Prostate gland (tissue), 2 donors: ENCODE measurements at regions of chr17 and their contacts with region 1.

Region 1: DNA sequence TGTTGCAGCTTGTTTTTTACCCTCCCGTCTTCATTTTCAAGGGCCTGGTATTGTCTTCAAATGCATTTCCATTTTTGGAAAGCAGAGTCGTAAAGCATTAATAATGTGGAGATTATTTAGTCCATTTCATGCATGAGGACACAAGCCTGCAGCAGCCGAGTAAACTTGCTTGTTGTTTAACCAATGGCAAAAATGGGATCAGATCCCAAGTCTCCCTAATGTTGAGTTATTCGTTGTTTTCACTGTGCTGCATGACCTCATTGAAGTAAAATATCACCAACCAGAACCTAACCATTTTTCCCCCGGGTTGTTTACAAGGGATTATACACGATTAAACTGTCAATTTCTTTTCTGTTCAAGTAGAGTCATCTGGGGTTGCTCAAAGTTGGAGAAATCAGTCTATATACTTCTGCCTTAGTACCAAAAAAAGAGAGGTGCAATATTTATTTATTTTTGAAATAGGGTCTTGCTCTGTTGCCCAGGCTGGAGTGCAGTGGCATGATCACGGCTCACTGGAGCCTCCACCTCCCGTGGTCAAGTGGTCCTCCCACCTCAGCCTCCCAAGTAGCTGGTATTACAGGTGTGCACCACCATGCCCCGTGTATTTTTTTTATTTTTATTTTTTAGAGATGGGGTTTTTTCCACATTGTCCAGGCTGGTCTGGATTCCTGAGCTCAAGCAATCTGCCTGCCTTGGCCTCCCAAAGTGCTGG is 12.4 kb downstream of the AMZ2 start:
- DNase-seq: no peak
- H3K4me3 ChIP-seq: no peak overlapping the region
- H3K27ac ChIP-seq: no peak overlapping the region
- H3K4me1 ChIP-seq: no peaks in the 10 kb centered on the region
- H3K27me3 ChIP-seq: no peaks in the 10 kb centered on the region
- CTCF ChIP-seq: no peak
- POLR2A ChIP-seq: no peak

Region 2: GRCh38 chr17:68398691-68399637 is 138.8 kb after region 1 on chr17:
- intact Hi-C with region 1: loop called (anchors 10 kb)
- DNase-seq: peak; percentile 59
- H3K4me3 ChIP-seq: no peak overlapping the region
- H3K27ac ChIP-seq: no peak overlapping the region
- H3K4me1 ChIP-seq: no peaks in the 10 kb centered on the region
- H3K27me3 ChIP-seq: no peaks in the 10 kb centered on the region
- CTCF ChIP-seq: peak; percentile 63 to 84 (median 78)
- POLR2A ChIP-seq: no peak

Region 3: GRCh38 chr17:68435876-68436842 is 176.0 kb after region 1 on chr17:
- intact Hi-C with region 1: loop called (anchors 5 kb)
- DNase-seq: peak; percentile 78
- H3K4me3 ChIP-seq: no peak overlapping the region
- H3K27ac ChIP-seq: no peak overlapping the region
- H3K4me1 ChIP-seq: peaks cover 5% of the 10 kb centered on the region
- H3K27me3 ChIP-seq: no peaks in the 10 kb centered on the region
- CTCF ChIP-seq: peak; percentile 75 to 90 (median 82)
- POLR2A ChIP-seq: no peak